Natural killer cell (primary cell): ENCODE measurements at regions of chr20 and their contacts with region 1.

Region 1: GRCh38 chr20:2688041-2688591 is 4.5 kb upstream of the EBF4 start:
- DNase-seq: peak; percentile 85 to 92
- ATAC-seq: peak; percentile 87 to 97 (median 89)
- H3K4me3 ChIP-seq: no peak overlapping the region
- H3K4me3 Mint-ChIP-seq: peak overlapping the region; percentile 69
- H3K27ac ChIP-seq: peak overlapping the region; percentile 31
- H3K27ac Mint-ChIP-seq: peak overlapping the region; percentile 77 to 80
- H3K4me1 ChIP-seq: peaks cover 28% of the 10 kb centered on the region
- H3K4me1 Mint-ChIP-seq: peaks cover 32 to 41% of the 10 kb centered on the region in 2 donors
- H3K27me3 ChIP-seq: peaks cover 3% of the 10 kb centered on the region
- H3K27me3 Mint-ChIP-seq: peaks cover 4 to 13% of the 10 kb centered on the region in 2 donors
- CTCF ChIP-seq: peak; percentile 90

Region 2: GRCh38 chr20:2637246-2637645 is 50.9 kb before region 1 on chr20:
- intact Hi-C with region 1: no loop called
- DNase-seq: peak in 1 of 2 donors; percentile 45
- ATAC-seq: peak; percentile 75 to 93 (median 82)
- H3K4me3 ChIP-seq: no peak overlapping the region
- H3K4me3 Mint-ChIP-seq: peak overlapping the region; percentile 87
- H3K27ac ChIP-seq: peak overlapping the region; percentile 47
- H3K27ac Mint-ChIP-seq: peak overlapping the region; percentile 79 to 89
- H3K4me1 ChIP-seq: peaks cover 36% of the 10 kb centered on the region
- H3K4me1 Mint-ChIP-seq: peaks cover 54 to 57% of the 10 kb centered on the region in 2 donors
- H3K27me3 ChIP-seq: no peaks in the 10 kb centered on the region
- H3K27me3 Mint-ChIP-seq: peaks cover 4 to 16% of the 10 kb centered on the region in 2 donors
- CTCF ChIP-seq: no peak

Region 3: GRCh38 chr20:2663887-2664719 is 24.0 kb before region 1 on chr20 and contains the start of gene IDH3B:
- intact Hi-C with region 1: loop called (anchors 1 kb)
- DNase-seq: peak; percentile 90 to 95
- ATAC-seq: peak; percentile 96 to 97 (median 97)
- H3K4me3 ChIP-seq: peak within 1 kb of the TSS; percentile 55
- H3K4me3 Mint-ChIP-seq: peak within 1 kb of the TSS; percentile 99
- H3K27ac ChIP-seq: peak within 1 kb of the TSS; percentile 96
- H3K27ac Mint-ChIP-seq: peak within 1 kb of the TSS; percentile 91 to 98
- H3K4me1 ChIP-seq: peaks cover 12% of the 10 kb centered on the region
- H3K4me1 Mint-ChIP-seq: peaks cover 16 to 24% of the 10 kb centered on the region in 2 donors
- H3K27me3 ChIP-seq: no peaks in the 10 kb centered on the region
- H3K27me3 Mint-ChIP-seq: peaks cover 0 to 6% of the 10 kb centered on the region in 2 donors
- CTCF ChIP-seq: no peak
- total RNA-seq, gene IDH3B: 149 to 161 (median 153) TPM

Region 4: GRCh38 chr20:2713285-2713684 is 25.2 kb after region 1 on chr20:
- intact Hi-C with region 1: no loop called
- DNase-seq: peak in 1 of 2 donors; percentile 74
- ATAC-seq: peak in 1 of 3 donors; percentile 79
- H3K4me3 ChIP-seq: no peak overlapping the region
- H3K4me3 Mint-ChIP-seq: no peak overlapping the region
- H3K27ac ChIP-seq: no peak overlapping the region
- H3K27ac Mint-ChIP-seq: no peak overlapping the region
- H3K4me1 ChIP-seq: peaks cover 3% of the 10 kb centered on the region
- H3K4me1 Mint-ChIP-seq: peaks cover 8 to 10% of the 10 kb centered on the region in 2 donors
- H3K27me3 ChIP-seq: no peaks in the 10 kb centered on the region
- H3K27me3 Mint-ChIP-seq: no peaks in the 10 kb centered on the region
- CTCF ChIP-seq: peak; percentile 28

Region 5: DNA sequence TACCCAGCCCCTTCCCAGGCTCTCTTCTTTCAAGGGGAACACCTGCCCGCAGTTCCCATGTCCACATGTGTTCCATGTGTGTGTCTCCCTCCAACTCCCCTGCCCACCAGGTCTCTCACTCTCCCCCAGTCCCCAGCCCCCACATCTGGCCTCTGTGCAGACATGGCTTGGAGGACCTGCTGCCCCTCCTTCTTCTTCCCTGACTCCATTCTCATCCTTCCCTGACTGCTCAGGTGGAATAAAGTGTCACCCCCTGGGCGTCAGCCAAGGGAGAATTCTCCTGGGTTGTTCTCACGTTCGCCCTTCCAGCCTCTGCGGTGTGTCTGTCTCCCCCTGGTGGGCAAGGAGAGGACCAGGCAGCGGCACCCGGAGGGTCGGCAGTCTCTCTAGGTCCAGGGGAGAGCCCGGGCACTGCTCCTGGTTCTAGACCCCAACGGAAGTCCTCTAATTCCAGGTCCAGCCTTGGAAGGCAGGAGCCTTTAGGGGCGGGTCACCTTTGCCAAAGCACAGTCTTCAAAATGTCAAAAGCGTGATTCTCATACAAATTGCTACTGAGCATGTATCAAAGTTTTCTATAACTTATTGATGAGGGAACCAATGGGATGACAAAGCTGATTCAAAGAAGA is 54.9 kb after region 1 on chr20:
- intact Hi-C with region 1: loop called (anchors 1 kb)
- DNase-seq: peak; percentile 63 to 91
- ATAC-seq: peak; percentile 64 to 69 (median 67)
- H3K4me3 ChIP-seq: no peak overlapping the region
- H3K4me3 Mint-ChIP-seq: peak overlapping the region; percentile 90
- H3K27ac ChIP-seq: peak overlapping the region; percentile 37
- H3K27ac Mint-ChIP-seq: peak overlapping the region; percentile 91 to 95
- H3K4me1 ChIP-seq: peaks cover 62% of the 10 kb centered on the region
- H3K4me1 Mint-ChIP-seq: peaks cover 56 to 63% of the 10 kb centered on the region in 2 donors
- H3K27me3 ChIP-seq: no peaks in the 10 kb centered on the region
- H3K27me3 Mint-ChIP-seq: no peaks in the 10 kb centered on the region
- CTCF ChIP-seq: peak; percentile 85

Region 6: GRCh38 chr20:2752567-2753460 is 64.7 kb after region 1 on chr20:
- intact Hi-C with region 1: loop called (anchors 1 kb)
- DNase-seq: peak; percentile 51 to 77
- ATAC-seq: peak; percentile 35 to 50 (median 48)
- H3K4me3 ChIP-seq: peak overlapping the region; percentile 32
- H3K4me3 Mint-ChIP-seq: peak overlapping the region; percentile 92
- H3K27ac ChIP-seq: no peak overlapping the region
- H3K27ac Mint-ChIP-seq: peak overlapping the region; percentile 45 to 70
- H3K4me1 ChIP-seq: peaks cover 45% of the 10 kb centered on the region
- H3K4me1 Mint-ChIP-seq: peaks cover 30 to 51% of the 10 kb centered on the region in 2 donors
- H3K27me3 ChIP-seq: peaks cover 18% of the 10 kb centered on the region
- H3K27me3 Mint-ChIP-seq: peaks cover 7 to 38% of the 10 kb centered on the region in 2 donors
- CTCF ChIP-seq: peak; percentile 83

Region 7: DNA sequence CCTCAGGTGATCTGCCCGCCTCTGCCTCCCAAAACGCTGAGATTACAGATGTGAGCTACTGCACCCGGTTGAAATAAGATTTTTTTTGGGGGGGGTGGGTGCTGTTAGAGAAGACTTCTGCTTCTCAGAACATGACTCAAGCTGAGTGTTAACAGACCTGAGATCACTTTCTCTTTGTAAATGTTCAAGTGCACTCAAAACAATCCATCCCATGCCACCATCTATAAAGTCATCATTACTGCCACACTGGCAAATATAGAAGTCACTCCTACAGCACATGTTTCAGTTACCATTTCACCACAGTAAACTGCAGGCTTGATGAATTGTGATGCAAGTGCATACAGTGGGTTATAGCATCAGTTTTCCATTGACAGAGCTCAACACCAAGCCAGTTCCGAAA is 161.4 kb after region 1 on chr20:
- intact Hi-C with region 1: loop called (anchors 1 kb)
- DNase-seq: no peak
- ATAC-seq: no peak
- H3K4me3 ChIP-seq: no peak overlapping the region
- H3K4me3 Mint-ChIP-seq: no peak overlapping the region
- H3K27ac ChIP-seq: no peak overlapping the region
- H3K27ac Mint-ChIP-seq: peak overlapping the region in 1 of 2 donors; percentile 90
- H3K4me1 ChIP-seq: peaks cover 23% of the 10 kb centered on the region
- H3K4me1 Mint-ChIP-seq: peaks cover 25 to 50% of the 10 kb centered on the region in 2 donors
- H3K27me3 ChIP-seq: no peaks in the 10 kb centered on the region
- H3K27me3 Mint-ChIP-seq: no peaks in the 10 kb centered on the region
- CTCF ChIP-seq: no peak

Region 8: DNA sequence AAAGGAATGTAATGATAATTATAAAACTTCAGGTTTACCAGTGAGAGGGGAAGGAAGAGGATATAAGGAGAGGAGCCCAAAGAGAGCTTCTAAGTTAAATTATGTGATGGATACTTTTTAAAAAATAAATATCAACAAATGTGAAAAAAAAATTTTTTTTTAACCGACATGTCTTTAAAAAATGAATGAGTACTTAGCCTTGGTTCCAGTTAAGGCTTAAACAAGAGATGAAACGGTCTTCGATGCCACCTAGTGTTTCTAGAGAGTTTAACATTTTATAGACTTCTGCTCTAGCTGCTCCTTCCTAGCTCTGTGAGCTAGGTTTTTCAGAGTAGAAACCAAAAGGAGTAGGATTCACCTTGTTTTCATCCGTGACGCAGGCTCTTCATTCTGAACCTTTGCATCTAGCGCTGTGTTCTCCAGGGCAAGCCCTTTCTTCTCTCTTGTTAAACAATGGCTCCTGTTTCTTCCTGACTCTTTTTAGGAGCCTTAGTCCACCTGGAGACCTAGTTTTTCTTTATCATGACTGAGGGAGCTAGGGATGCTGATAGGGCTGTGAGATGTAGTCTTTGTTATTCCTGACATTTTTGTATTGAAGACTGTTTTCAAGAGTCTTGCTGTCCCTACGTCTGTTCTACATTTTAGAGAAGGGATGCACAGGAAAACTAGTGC is 312.9 kb after region 1 on chr20:
- intact Hi-C with region 1: loop called (anchors 1 kb)
- DNase-seq: peak in 1 of 2 donors; percentile 68
- ATAC-seq: peak; percentile 73 to 94 (median 80)
- H3K4me3 ChIP-seq: no peak overlapping the region
- H3K4me3 Mint-ChIP-seq: no peak overlapping the region
- H3K27ac ChIP-seq: no peak overlapping the region
- H3K27ac Mint-ChIP-seq: peak overlapping the region in 1 of 2 donors; percentile 16
- H3K4me1 ChIP-seq: no peaks in the 10 kb centered on the region
- H3K4me1 Mint-ChIP-seq: no peaks in the 10 kb centered on the region
- H3K27me3 ChIP-seq: no peaks in the 10 kb centered on the region
- H3K27me3 Mint-ChIP-seq: no peaks in the 10 kb centered on the region
- CTCF ChIP-seq: peak; percentile 63